CD8-positive, alpha-beta memory T cell (primary cell): ENCODE measurements at regions of chr1 and their contacts with region 1.

Region 1: GRCh38 chr1:110209715-110210603 is at the start of gene KCNC4:
- DNase-seq: peak; percentile 88 to 95 (median 90)
- H3K4me3 ChIP-seq: peak within 1 kb of the TSS; percentile 68
- H3K4me3 Mint-ChIP-seq: peak within 1 kb of the TSS; percentile 82 to 94 (median 89)
- H3K27ac ChIP-seq: peak within 1 kb of the TSS; percentile 66
- H3K27ac Mint-ChIP-seq: peak within 1 kb of the TSS; percentile 85 to 98 (median 95)
- H3K4me1 ChIP-seq: peaks cover 29% of the 10 kb centered on the region
- H3K4me1 Mint-ChIP-seq: peaks cover 34 to 61% (median 53%) of the 10 kb centered on the region in 3 donors
- H3K27me3 ChIP-seq: no peaks in the 10 kb centered on the region
- H3K27me3 Mint-ChIP-seq: peaks cover 0 to 5% of the 10 kb centered on the region in 2 donors
- total RNA-seq, gene KCNC4: 6.4 to 8.4 TPM

Region 2: GRCh38 chr1:110196917-110197765 is 12.8 kb before region 1 on chr1:
- CTCF ChIA-PET with region 1: interaction called, 24 read pairs
- POLR2A ChIA-PET with region 1: no interaction called
- DNase-seq: peak; percentile 32 to 66 (median 47)
- H3K4me3 ChIP-seq: no peak overlapping the region
- H3K4me3 Mint-ChIP-seq: no peak overlapping the region
- H3K27ac ChIP-seq: no peak overlapping the region
- H3K27ac Mint-ChIP-seq: no peak overlapping the region
- H3K4me1 ChIP-seq: no peaks in the 10 kb centered on the region
- H3K4me1 Mint-ChIP-seq: peaks cover 0 to 2% (median 0%) of the 10 kb centered on the region in 3 donors
- H3K27me3 ChIP-seq: no peaks in the 10 kb centered on the region
- H3K27me3 Mint-ChIP-seq: no peaks in the 10 kb centered on the region

Region 3: DNA sequence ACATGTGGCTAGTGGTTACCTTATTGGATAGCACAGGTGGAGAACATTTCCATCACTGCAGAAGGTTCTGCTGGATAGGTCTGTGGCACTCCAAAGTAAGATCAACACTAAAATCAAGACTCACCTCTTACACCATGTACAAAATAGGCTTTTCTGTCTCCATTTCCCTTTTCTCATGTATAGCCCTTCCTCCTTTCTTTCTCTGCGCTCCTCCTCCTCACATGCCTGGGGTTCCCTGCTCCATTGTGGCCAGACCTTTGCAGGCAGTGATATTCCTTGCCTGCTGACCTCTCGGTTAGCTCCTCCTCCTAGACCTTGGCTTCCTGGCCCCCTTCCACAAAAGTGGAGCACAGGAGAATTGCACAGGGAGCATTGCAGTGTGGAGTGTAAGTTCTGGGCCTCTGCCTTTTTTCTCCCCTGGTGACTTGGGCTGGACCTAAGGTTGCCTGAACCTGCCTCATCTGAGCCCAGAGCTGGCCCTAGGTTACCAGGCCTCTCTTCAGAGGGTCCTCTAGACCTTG is 96.0 kb after region 1 on chr1:
- CTCF ChIA-PET with region 1: interaction called, 438 read pairs
- POLR2A ChIA-PET with region 1: interaction called, 3 read pairs
- DNase-seq: no peak
- H3K4me3 ChIP-seq: no peak overlapping the region
- H3K4me3 Mint-ChIP-seq: no peak overlapping the region
- H3K27ac ChIP-seq: no peak overlapping the region
- H3K27ac Mint-ChIP-seq: no peak overlapping the region
- H3K4me1 ChIP-seq: no peaks in the 10 kb centered on the region
- H3K4me1 Mint-ChIP-seq: no peaks in the 10 kb centered on the region
- H3K27me3 ChIP-seq: no peaks in the 10 kb centered on the region
- H3K27me3 Mint-ChIP-seq: peaks cover 1 to 16% of the 10 kb centered on the region in 2 donors

Region 4: GRCh38 chr1:110338886-110339406 is 129.0 kb after region 1 on chr1 and contains the start of gene RBM15:
- CTCF ChIA-PET with region 1: interaction called, 77 read pairs
- POLR2A ChIA-PET with region 1: interaction called, 42 read pairs
- DNase-seq: peak; percentile 93 to 99 (median 99)
- H3K4me3 ChIP-seq: peak within 1 kb of the TSS; percentile 80
- H3K4me3 Mint-ChIP-seq: no peak within 1 kb of the TSS
- H3K27ac ChIP-seq: peak within 1 kb of the TSS; percentile 97
- H3K27ac Mint-ChIP-seq: peak within 1 kb of the TSS in 2 of 8 donors; percentile 98
- H3K4me1 ChIP-seq: peaks cover 48% of the 10 kb centered on the region
- H3K4me1 Mint-ChIP-seq: peaks cover 53 to 63% (median 62%) of the 10 kb centered on the region in 3 donors
- H3K27me3 ChIP-seq: no peaks in the 10 kb centered on the region
- H3K27me3 Mint-ChIP-seq: no peaks in the 10 kb centered on the region
- total RNA-seq, gene RBM15: 53.9 to 54.0 TPM

Region 5: DNA sequence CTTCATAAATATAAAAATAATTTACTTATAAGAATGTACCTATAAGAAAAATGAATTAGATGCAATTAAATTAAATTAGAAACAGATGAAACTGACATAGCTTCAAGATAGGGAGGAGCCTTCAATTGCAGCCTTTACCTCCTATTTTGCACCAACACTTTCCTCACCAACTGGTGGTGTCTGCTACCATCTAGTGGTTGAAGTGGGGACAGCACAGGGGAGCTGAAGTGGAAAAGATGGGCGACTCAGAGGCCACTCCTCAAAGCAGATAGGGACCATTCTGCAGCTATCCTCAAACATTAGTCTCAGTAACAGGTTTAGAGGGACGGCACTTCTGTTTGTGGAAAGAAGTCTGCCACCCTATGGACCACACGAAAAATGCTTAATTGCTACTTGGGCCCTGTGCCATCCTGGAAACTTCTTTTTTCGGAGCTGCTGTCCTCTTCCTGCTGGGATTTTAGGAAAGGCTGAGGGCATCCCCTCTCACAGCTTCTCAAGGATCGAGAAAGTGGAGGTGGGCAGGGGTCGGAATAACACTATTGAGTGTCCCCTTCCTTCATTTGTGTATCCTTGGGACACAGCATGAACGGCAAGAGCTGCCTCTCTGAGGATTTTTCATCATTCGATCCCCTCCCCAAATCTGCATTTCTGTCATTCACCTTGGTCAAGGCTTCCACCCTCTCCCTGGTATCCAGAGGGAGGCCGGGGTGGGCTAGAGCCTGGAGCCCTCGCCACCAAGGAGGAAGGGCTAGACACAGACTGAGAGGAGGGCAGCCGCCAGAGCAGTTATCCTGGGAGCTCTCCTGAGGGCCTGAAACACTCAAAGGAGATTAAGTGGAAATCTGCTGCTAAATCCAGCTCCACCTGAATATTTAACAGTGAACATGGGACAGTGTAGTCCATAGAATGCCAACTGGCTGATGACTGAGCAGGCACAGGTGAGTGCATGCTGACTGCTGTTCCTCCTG is 250.6 kb after region 1 on chr1:
- CTCF ChIA-PET with region 1: interaction called, 124 read pairs
- POLR2A ChIA-PET with region 1: no interaction called
- DNase-seq: peak; percentile 73 to 86 (median 76)
- H3K4me3 ChIP-seq: no peak overlapping the region
- H3K4me3 Mint-ChIP-seq: no peak overlapping the region
- H3K27ac ChIP-seq: no peak overlapping the region
- H3K27ac Mint-ChIP-seq: peak overlapping the region in 1 of 8 donors; percentile 23
- H3K4me1 ChIP-seq: no peaks in the 10 kb centered on the region
- H3K4me1 Mint-ChIP-seq: no peaks in the 10 kb centered on the region
- H3K27me3 ChIP-seq: no peaks in the 10 kb centered on the region
- H3K27me3 Mint-ChIP-seq: peaks cover 0 to 4% of the 10 kb centered on the region in 2 donors